ENCODE measurements at regions of chr17 and their contacts with region 1.

Region 1: DNA sequence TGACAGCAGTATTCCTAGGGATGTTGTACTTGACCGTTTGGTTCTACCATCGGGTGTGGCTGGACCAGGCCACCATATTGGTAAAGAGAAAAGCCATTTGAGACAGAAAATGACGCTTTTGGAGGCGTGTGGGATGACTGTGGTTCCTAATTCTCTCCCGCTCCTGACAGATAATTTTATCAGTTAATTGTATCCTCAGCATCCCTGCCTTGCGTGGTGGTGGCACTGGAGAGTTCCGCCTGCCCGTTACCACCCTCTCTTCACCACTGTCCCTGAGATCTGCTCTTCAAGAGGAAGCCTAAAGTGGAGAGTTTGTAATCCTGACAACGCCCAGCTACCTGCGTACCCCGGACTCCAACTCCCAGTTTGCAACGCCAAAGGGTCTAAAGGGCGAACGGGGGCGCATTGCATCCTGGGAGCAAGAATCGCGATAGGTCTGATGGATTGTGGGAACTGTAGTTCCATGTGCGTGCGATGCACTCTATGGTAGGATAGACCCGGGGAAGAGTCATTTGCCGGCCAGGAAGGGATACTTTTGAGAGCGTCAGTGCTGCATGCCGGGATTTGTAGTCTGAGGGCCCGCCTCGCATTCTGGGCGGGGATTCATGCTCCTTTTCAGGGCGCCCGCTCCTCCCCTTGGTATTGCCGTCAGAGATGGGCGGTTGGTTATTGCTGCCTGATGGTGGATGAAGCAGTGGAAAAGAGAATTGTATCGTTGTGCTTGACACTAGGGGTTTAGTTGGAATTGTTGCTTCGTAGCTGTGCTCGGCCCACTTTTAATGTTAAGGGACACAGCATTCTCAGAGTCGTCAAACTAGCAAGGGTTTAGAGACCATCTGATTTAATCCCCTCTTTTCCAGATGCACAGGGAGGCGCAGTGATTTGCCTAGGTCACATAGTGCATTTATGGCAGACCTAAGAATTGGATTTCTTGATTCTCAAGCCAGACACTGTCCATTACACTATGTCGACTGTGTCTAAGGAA is 965 bp upstream of the PHF12 start:
- DNase-seq: peak; percentile 98 to 99
- ATAC-seq: peak; percentile 80 to 85
- H3K4me3 ChIP-seq: peak overlapping the region; percentile 49 to 88 (median 68)
- H3K27ac ChIP-seq: peak overlapping the region; percentile 93 to 96 (median 95)
- H3K4me1 ChIP-seq: peaks cover 22 to 25% of the 10 kb centered on the region in 2 donors
- H3K27me3 ChIP-seq: no peaks in the 10 kb centered on the region
- CTCF ChIP-seq: no peak
- POLR2A ChIP-seq: peak; percentile 55 to 84

Region 2: DNA sequence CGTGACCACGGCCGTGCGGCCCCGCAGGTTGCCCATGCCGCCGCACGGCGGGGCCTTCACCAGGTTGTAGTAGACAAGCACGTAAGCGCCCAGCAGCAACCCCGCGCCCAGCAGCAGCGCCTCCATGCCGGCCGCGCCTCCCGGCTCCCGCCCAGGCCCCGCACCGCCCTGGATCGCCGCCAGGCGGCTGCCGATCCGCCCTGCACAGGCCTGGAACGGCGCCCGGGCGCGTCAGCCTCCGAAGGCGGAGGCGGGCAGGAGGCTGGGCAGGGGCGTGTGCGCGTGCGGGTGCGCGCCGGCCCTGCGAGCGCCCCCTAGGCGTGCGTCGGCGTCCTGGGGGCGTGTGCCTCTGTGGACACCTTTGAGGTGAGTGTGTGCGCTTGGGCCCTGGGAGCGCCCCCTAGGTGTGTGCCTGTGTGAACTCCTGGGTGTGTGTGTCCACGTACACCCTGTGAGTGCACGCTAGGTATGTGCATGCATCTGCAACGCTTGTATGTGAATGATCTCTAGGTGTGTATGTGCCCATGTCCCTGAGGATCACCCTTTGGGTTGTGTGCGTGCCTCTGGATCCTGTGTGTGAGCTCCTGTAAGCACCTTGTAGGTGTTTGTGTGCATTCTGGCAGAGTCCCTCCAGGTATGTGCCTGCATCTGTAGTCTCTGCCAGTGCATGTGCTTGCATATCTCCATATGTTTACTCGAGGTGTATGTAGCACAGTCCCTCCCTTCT is 49.3 kb before region 1 on chr17 and contains the start of gene DHRS13:
- in situ Hi-C with region 1: no loop called
- intact Hi-C with region 1: loop called (anchors 2 kb)
- DNase-seq: peak; percentile 51 to 73
- ATAC-seq: peak; percentile 87 to 88
- H3K4me3 ChIP-seq: peak within 1 kb of the TSS; percentile 61 to 84 (median 70)
- H3K27ac ChIP-seq: peak within 1 kb of the TSS; percentile 68 to 83 (median 80)
- H3K4me1 ChIP-seq: peaks cover 13 to 24% of the 10 kb centered on the region in 2 donors
- H3K27me3 ChIP-seq: no peaks in the 10 kb centered on the region
- CTCF ChIP-seq: peak; percentile 72 to 85 (median 82)
- POLR2A ChIP-seq: no peak
- total RNA-seq, gene DHRS13: 0.25 to 3.7 (median 2.4) TPM

Region 3: DNA sequence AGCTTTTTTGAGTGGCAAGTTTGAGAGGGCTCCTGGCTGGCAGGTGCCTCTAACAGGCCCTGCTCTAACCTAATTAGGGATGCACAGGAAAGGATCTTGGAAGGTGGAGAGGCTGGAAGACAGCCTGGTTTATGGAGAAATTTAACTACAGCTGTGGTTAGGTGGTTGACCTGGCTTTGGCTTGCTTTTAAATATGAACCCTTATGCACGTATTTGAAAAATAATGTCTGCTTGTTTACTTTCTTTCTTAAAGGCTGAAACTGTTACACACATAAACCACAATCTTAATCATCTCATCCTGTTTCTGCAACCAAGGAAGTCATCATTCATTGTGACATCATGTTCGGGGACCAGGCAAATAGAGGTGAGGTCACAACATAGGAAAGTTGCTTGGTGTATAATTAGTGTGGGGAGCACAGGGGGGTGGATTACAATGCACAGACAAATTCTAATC is 26.3 kb before region 1 on chr17:
- in situ Hi-C with region 1: no loop called
- intact Hi-C with region 1: no loop called
- DNase-seq: no peak
- ATAC-seq: peak in 1 of 2 donors; percentile 20
- H3K4me3 ChIP-seq: no peak overlapping the region
- H3K27ac ChIP-seq: peak overlapping the region; percentile 50 to 70 (median 59)
- H3K4me1 ChIP-seq: peaks cover 17 to 18% of the 10 kb centered on the region in 2 donors
- H3K27me3 ChIP-seq: no peaks in the 10 kb centered on the region
- CTCF ChIP-seq: no peak
- POLR2A ChIP-seq: peak in 1 of 2 donors; percentile 6

Measured in gastrocnemius medialis (tissue), 4 donors.